Activated naive CD4-positive, alpha-beta T cell treated with anti-CD3 and anti-CD28 coated beads for 36 hours (primary cell): ENCODE measurements at regions of chr1 and their contacts with region 1.

Region 1: DNA sequence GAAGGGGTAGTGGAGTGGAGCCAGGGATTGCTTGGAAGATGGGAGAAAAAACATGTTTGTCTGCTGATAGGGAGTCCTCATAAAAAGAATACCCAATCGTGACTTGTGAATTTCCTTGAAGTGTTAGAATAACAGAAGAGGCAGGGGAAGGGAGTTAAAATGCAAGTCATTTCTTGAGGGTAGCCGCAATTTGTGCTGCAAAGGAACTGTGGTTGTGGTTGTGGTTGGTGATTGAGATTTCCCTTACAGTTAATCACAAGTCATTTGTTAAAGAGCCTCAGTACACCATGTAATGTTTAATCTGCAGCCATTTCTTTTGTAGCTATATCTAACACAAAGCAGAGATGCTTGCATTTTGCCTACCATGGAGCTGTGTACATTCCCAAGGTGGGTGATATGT is 38.5 kb upstream of the EGLN1 start:
- DNase-seq: peak; percentile 81
- H3K4me3 Mint-ChIP-seq: no peak overlapping the region
- H3K27ac Mint-ChIP-seq: no peak overlapping the region
- H3K4me1 Mint-ChIP-seq: peaks cover 25% of the 10 kb centered on the region
- H3K27me3 Mint-ChIP-seq: peaks cover 63% of the 10 kb centered on the region

Region 2: DNA sequence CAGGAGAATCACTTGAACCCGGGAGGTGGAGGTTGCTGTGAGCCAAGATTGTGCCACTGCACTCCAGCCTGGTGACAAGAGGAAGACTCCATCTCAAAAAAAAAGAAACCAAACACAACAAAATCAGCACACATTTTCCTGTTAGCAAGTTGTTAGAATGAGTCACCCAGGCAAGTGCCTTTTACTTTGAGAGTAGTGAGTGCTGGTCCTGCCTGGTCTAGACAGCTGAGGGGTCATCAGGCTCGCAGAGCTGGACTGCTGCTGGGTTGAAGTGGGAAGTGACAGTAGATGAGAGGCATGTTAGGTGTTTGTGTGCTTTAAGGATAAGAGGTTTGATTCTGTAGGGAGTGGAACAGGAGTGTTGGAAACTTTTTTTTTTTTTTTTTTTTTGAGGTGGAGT is 187.7 kb before region 1 on chr1:
- CTCF ChIA-PET with region 1: no interaction called
- intact Hi-C with region 1: loop called (anchors 5 kb)
- DNase-seq: peak; percentile 18
- H3K4me3 Mint-ChIP-seq: no peak overlapping the region
- H3K27ac Mint-ChIP-seq: peak overlapping the region; percentile 98
- H3K4me1 Mint-ChIP-seq: peaks cover 22% of the 10 kb centered on the region
- H3K27me3 Mint-ChIP-seq: no peaks in the 10 kb centered on the region

Region 3: GRCh38 chr1:231351816-231352215 is 108.8 kb before region 1 on chr1:
- CTCF ChIA-PET with region 1: no interaction called
- intact Hi-C with region 1: no loop called
- DNase-seq: no peak
- H3K4me3 Mint-ChIP-seq: no peak overlapping the region
- H3K27ac Mint-ChIP-seq: no peak overlapping the region
- H3K4me1 Mint-ChIP-seq: no peaks in the 10 kb centered on the region
- H3K27me3 Mint-ChIP-seq: no peaks in the 10 kb centered on the region

Region 4: GRCh38 chr1:231407547-231408396 is 52.8 kb before region 1 on chr1:
- CTCF ChIA-PET with region 1: no interaction called
- intact Hi-C with region 1: no loop called
- DNase-seq: no peak
- H3K4me3 Mint-ChIP-seq: no peak overlapping the region
- H3K27ac Mint-ChIP-seq: no peak overlapping the region
- H3K4me1 Mint-ChIP-seq: peaks cover 19% of the 10 kb centered on the region
- H3K27me3 Mint-ChIP-seq: no peaks in the 10 kb centered on the region

Region 5: GRCh38 chr1:231493421-231494185 is 33.0 kb after region 1 on chr1:
- CTCF ChIA-PET with region 1: no interaction called
- intact Hi-C with region 1: loop called (anchors 1 kb)
- DNase-seq: peak; percentile 35
- H3K4me3 Mint-ChIP-seq: peak overlapping the region; percentile 32
- H3K27ac Mint-ChIP-seq: peak overlapping the region; percentile 70
- H3K4me1 Mint-ChIP-seq: peaks cover 14% of the 10 kb centered on the region
- H3K27me3 Mint-ChIP-seq: peaks cover 7% of the 10 kb centered on the region

Region 6: DNA sequence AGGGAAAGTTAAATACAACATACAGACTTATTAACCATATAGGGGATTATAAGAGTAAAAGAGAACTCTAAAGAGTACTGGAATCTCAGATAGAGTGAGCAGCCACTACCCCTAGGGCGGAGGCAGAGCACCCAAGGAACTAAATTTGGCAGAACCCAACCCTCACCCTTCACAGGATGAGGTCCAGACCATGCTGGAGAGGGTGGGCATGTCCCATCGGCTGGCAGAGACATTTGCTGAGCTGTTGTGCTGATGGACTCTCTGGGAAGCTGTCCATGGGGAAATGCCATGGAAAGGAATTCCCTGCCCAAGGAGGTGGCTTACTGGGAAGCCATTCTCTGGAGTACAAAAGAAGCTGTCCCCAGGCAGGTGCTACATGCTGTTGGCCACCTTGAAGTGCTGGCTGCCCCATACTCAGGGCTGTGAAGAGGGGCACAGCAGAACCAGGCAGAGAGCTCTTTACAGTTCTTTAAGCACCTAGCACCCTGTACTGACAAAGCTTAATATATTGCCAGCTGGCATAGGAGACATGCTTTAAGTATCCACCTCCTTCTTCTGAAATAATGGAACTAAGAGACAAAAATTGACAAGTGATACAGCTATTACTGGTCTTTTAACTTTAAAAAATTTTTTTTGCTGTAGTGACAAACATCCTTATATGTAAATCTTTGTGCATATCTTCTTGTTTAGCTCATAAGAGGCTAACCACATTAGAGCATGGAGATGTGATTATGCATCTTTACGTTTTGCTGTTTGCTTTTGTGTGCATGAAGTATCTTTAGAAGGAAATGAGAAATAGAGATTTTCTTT is 97.5 kb after region 1 on chr1:
- CTCF ChIA-PET with region 1: no interaction called
- intact Hi-C with region 1: loop called (anchors 5 kb)
- DNase-seq: no peak
- H3K4me3 Mint-ChIP-seq: no peak overlapping the region
- H3K27ac Mint-ChIP-seq: no peak overlapping the region
- H3K4me1 Mint-ChIP-seq: peaks cover 22% of the 10 kb centered on the region
- H3K27me3 Mint-ChIP-seq: no peaks in the 10 kb centered on the region

Region 7: DNA sequence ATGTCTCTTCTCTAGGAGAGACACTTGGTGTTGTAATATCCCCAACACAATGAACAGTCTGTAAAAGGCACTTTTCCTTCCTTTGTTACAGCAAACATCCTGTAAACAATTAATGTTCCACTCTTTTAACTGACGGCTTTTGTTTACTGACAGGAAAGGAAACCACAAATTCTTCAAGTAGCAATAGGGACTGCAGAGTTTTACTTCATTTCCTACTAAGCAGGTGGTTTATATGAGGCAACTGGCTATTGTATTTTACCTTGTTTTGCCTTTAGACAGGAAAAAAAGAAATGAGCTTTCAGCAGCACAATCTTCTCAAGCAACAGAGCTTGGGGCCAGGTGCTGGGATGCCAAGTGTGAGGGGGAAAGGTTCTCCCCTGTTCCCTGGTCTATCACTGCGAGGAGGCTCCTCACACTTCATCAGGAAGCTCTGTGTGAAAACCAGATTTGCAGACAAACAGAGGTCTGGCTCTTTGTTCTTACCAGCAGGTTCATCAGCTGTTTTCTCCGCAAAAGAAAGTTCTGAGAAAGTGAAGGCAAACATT is 1118.1 kb after region 1 on chr1:
- CTCF ChIA-PET with region 1: no interaction called
- intact Hi-C with region 1: loop called (anchors 10 kb)
- DNase-seq: no peak
- H3K4me3 Mint-ChIP-seq: no peak overlapping the region
- H3K27ac Mint-ChIP-seq: peak overlapping the region; percentile 10
- H3K4me1 Mint-ChIP-seq: peaks cover 29% of the 10 kb centered on the region
- H3K27me3 Mint-ChIP-seq: no peaks in the 10 kb centered on the region